Uterus (tissue), 4 donors: ENCODE measurements at regions of chr17 and their contacts with region 1.

Region 1: GRCh38 chr17:47315451-47316266 is 8.1 kb upstream of the EFCAB13 start:
- DNase-seq: peak in 1 of 2 donors; percentile 60
- H3K4me3 ChIP-seq: no peak overlapping the region
- H3K27ac ChIP-seq: peak overlapping the region; percentile 73 to 74
- H3K4me1 ChIP-seq: peaks cover 0 to 4% of the 10 kb centered on the region in 2 donors
- H3K27me3 ChIP-seq: no peaks in the 10 kb centered on the region
- CTCF ChIP-seq: peak; percentile 80 to 95 (median 86)
- POLR2A ChIP-seq: no peak

Region 2: GRCh38 chr17:47229535-47230443 is 85.9 kb before region 1 on chr17:
- intact Hi-C with region 1: loop called (anchors 5 kb)
- DNase-seq: peak; percentile 88 to 95
- H3K4me3 ChIP-seq: peak overlapping the region; percentile 10 to 21
- H3K27ac ChIP-seq: peak overlapping the region; percentile 68 to 86
- H3K4me1 ChIP-seq: peaks cover 0 to 7% of the 10 kb centered on the region in 2 donors
- H3K27me3 ChIP-seq: no peaks in the 10 kb centered on the region
- CTCF ChIP-seq: peak; percentile 99
- POLR2A ChIP-seq: no peak